ENCODE measurements at regions of chr5 and their contacts with region 1.

Region 1: GRCh38 chr5:43120720-43121564 is at the start of gene ZNF131:
- DNase-seq: peak; percentile 99
- ATAC-seq: peak; percentile 88
- H3K4me3 Mint-ChIP-seq: peak within 1 kb of the TSS; percentile 93
- H3K27ac Mint-ChIP-seq: peak within 1 kb of the TSS; percentile 98
- H3K4me1 Mint-ChIP-seq: peaks cover 29% of the 10 kb centered on the region
- H3K27me3 Mint-ChIP-seq: no peaks in the 10 kb centered on the region
- total RNA-seq, gene ZNF131: 55.6 to 58.0 TPM

Region 2: GRCh38 chr5:42950440-42951292 is 170.3 kb before region 1 on chr5:
- POLR2A ChIA-PET with region 1: interaction called, 29 read pairs
- DNase-seq: peak; percentile 35
- ATAC-seq: peak; percentile 38
- H3K4me3 Mint-ChIP-seq: peak overlapping the region; percentile 96
- H3K27ac Mint-ChIP-seq: peak overlapping the region; percentile 100
- H3K4me1 Mint-ChIP-seq: peaks cover 20% of the 10 kb centered on the region
- H3K27me3 Mint-ChIP-seq: no peaks in the 10 kb centered on the region

Region 3: GRCh38 chr5:42982107-42982622 is 138.8 kb before region 1 on chr5:
- POLR2A ChIA-PET with region 1: no interaction called
- DNase-seq: no peak
- ATAC-seq: no peak
- H3K4me3 Mint-ChIP-seq: no peak overlapping the region
- H3K27ac Mint-ChIP-seq: no peak overlapping the region
- H3K4me1 Mint-ChIP-seq: peaks cover 18% of the 10 kb centered on the region
- H3K27me3 Mint-ChIP-seq: no peaks in the 10 kb centered on the region

Region 4: GRCh38 chr5:43008369-43009153 is 112.4 kb before region 1 on chr5:
- POLR2A ChIA-PET with region 1: interaction called, 19 read pairs
- DNase-seq: peak; percentile 88
- ATAC-seq: peak; percentile 61
- H3K4me3 Mint-ChIP-seq: peak overlapping the region; percentile 90
- H3K27ac Mint-ChIP-seq: peak overlapping the region; percentile 99
- H3K4me1 Mint-ChIP-seq: peaks cover 35% of the 10 kb centered on the region
- H3K27me3 Mint-ChIP-seq: no peaks in the 10 kb centered on the region

Region 5: DNA sequence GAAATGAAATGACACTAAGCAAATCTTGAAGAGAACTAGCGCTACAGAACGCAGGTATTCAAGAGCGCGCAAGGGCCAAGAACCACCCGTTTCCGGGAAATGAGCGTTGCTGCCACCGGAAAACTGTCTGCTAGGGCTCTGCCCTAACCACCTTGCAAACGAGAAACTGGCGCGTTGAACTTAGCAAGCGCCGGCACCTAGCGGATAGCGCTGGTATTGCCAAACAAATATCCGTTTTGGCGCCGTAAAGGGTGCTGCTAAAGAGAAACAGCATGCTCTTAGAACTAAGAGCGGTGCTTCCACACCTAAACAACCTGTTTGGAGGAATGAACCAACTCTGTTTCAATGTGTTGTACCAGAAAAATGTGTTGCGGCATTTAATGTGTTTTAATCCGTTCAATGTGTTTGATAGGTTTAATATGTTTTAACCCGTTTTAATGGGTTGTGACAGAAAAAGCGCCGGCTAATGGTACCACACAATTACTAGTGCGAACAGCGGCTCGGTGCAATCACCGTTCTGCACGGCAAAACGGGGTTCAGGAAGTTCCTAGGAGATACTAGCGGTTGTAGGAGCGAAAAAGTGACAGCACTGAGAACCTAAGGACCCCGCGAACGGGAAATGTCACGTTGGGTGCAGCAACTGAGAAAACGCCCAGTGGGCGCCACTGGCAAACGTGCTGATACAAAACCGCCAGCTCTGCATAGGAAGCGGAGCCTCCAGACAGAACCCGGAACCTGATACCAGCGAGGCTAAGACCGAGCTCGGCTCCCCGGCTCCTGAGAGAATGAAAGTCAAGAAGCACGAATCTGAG is 80.4 kb before region 1 on chr5 and contains the start of gene ANXA2R:
- POLR2A ChIA-PET with region 1: interaction called, 52 read pairs
- DNase-seq: peak; percentile 87
- ATAC-seq: peak; percentile 48
- H3K4me3 Mint-ChIP-seq: peak within 1 kb of the TSS; percentile 93
- H3K27ac Mint-ChIP-seq: peak within 1 kb of the TSS; percentile 99
- H3K4me1 Mint-ChIP-seq: peaks cover 34% of the 10 kb centered on the region
- H3K27me3 Mint-ChIP-seq: no peaks in the 10 kb centered on the region
- total RNA-seq, gene ANXA2R: 39.2 to 41.1 TPM

Region 6: GRCh38 chr5:43105369-43106289 is 15.3 kb before region 1 on chr5:
- POLR2A ChIA-PET with region 1: interaction called, 75 read pairs
- DNase-seq: peak; percentile 86
- ATAC-seq: peak; percentile 97
- H3K4me3 Mint-ChIP-seq: peak overlapping the region; percentile 85
- H3K27ac Mint-ChIP-seq: peak overlapping the region; percentile 82
- H3K4me1 Mint-ChIP-seq: peaks cover 31% of the 10 kb centered on the region
- H3K27me3 Mint-ChIP-seq: no peaks in the 10 kb centered on the region

Region 7: GRCh38 chr5:43179836-43180235 is 58.9 kb after region 1 on chr5:
- POLR2A ChIA-PET with region 1: no interaction called
- DNase-seq: no peak
- ATAC-seq: no peak
- H3K4me3 Mint-ChIP-seq: no peak overlapping the region
- H3K27ac Mint-ChIP-seq: no peak overlapping the region
- H3K4me1 Mint-ChIP-seq: no peaks in the 10 kb centered on the region
- H3K27me3 Mint-ChIP-seq: no peaks in the 10 kb centered on the region

Region 8: DNA sequence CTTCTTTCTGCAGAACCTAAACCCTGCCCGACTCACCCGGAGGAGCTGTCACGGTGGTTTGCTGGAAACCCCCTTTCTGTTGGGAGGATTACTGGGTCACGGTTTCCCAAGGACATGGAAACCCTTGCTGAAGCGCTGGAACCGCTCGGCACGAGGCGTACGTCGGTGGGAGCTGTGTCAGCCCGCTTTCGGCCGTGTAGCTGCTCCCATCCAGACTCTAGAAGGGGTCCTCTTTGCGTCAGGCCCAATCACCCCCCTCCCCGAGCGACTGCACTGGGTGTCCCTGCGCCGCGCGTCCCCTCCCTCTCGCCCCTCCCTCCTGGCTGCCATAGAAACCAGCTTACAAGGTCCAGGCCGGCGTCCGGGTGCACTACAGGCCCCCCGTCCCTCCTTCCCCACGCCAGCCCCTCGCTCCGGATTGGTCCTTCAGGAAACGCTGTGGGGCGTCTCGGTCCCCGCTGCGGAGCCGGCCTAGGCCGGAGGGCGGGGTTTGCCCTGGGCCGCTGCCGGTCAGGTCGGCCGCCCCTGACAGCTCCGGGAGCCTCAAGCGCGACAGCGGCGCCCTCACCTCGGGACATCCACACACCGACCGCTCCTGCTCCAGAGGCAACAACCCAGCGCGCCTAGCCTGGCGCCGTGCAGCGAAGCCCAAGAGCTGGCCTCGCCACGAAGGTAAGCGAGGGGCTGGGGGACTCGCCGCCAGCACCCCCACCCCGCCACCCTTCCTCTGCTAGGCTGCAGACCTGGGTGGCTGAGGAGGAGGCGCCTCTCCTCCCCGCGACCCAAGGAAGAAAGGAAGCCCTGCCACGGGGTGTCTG is 71.0 kb after region 1 on chr5 and contains the start of gene NIM1K:
- POLR2A ChIA-PET with region 1: interaction called, 10 read pairs
- DNase-seq: peak; percentile 59
- ATAC-seq: peak; percentile 67
- H3K4me3 Mint-ChIP-seq: peak within 1 kb of the TSS; percentile 86
- H3K27ac Mint-ChIP-seq: no peak within 1 kb of the TSS
- H3K4me1 Mint-ChIP-seq: peaks cover 27% of the 10 kb centered on the region
- H3K27me3 Mint-ChIP-seq: peaks cover 16% of the 10 kb centered on the region
- total RNA-seq, gene NIM1K: 0.43 to 0.75 TPM

Region 9: DNA sequence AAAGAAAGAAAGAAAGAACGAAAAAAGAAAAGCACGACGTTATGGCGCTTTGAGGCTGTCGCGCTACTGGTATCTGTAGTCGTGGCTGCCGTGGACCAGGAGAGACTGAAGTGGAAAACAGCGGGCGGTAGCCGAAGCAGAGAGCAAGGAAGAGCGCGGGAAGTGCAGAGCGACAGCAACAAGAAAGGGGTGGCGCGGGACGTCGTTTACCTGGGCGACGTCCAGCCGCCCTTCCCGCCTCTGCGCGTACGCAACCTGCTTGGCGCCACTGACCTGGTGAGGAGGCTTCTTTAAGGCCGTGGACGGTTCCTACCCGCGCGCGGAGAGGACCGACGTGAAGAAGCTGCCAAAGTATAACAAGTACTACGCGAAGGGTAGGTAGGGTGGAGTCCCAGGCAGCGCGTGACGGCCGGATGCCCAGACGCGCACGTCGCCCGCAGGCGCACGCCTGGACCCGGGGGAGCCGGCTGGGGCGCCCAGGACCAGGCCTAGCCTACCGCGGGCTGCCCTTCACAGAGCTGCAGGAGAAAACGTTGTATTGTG is 275.9 kb after region 1 on chr5:
- POLR2A ChIA-PET with region 1: interaction called, 19 read pairs
- DNase-seq: peak; percentile 81
- ATAC-seq: peak; percentile 99
- H3K4me3 Mint-ChIP-seq: peak overlapping the region; percentile 99
- H3K27ac Mint-ChIP-seq: peak overlapping the region; percentile 99
- H3K4me1 Mint-ChIP-seq: peaks cover 20% of the 10 kb centered on the region
- H3K27me3 Mint-ChIP-seq: no peaks in the 10 kb centered on the region